Natural killer cell (primary cell): ENCODE measurements at regions of chr1 and their contacts with region 1.

Region 1: GRCh38 chr1:86380257-86380861 is 15.8 kb downstream of the ODF2L start:
- DNase-seq: peak in 1 of 2 donors; percentile 82
- ATAC-seq: peak; percentile 76 to 90 (median 81)
- H3K4me3 ChIP-seq: no peak overlapping the region
- H3K4me3 Mint-ChIP-seq: no peak overlapping the region
- H3K27ac ChIP-seq: no peak overlapping the region
- H3K27ac Mint-ChIP-seq: no peak overlapping the region
- H3K4me1 ChIP-seq: no peaks in the 10 kb centered on the region
- H3K4me1 Mint-ChIP-seq: peaks cover 0 to 8% of the 10 kb centered on the region in 2 donors
- H3K27me3 ChIP-seq: no peaks in the 10 kb centered on the region
- H3K27me3 Mint-ChIP-seq: no peaks in the 10 kb centered on the region
- CTCF ChIP-seq: peak; percentile 91

Region 2: GRCh38 chr1:86470859-86471258 is 90.5 kb after region 1 on chr1:
- intact Hi-C with region 1: loop called (anchors 2 kb)
- DNase-seq: no peak
- ATAC-seq: no peak
- H3K4me3 ChIP-seq: no peak overlapping the region
- H3K4me3 Mint-ChIP-seq: no peak overlapping the region
- H3K27ac ChIP-seq: no peak overlapping the region
- H3K27ac Mint-ChIP-seq: no peak overlapping the region
- H3K4me1 ChIP-seq: no peaks in the 10 kb centered on the region
- H3K4me1 Mint-ChIP-seq: no peaks in the 10 kb centered on the region
- H3K27me3 ChIP-seq: peaks cover 3% of the 10 kb centered on the region
- H3K27me3 Mint-ChIP-seq: peaks cover 18 to 22% of the 10 kb centered on the region in 2 donors
- CTCF ChIP-seq: no peak

Region 3: DNA sequence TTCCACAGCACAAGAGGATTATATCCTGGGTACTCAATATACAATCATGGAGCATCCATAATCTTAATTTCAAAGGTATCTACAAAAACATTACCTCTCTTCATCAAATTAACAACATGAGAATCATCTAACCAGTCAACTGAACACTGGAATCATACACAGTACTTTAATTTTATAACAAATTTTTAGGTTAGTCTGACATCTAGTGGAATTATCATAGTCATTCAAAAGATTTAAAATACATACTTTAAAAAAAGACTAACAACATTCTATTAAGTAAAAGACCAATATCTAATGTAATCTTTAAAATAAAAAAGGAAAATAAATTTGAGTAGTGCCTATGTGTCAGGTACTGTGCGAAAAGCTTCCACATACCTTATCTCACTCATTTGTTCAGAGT is 307.2 kb after region 1 on chr1:
- intact Hi-C with region 1: loop called (anchors 5 kb)
- DNase-seq: no peak
- ATAC-seq: peak in 2 of 3 donors; percentile 49 to 50
- H3K4me3 ChIP-seq: no peak overlapping the region
- H3K4me3 Mint-ChIP-seq: no peak overlapping the region
- H3K27ac ChIP-seq: no peak overlapping the region
- H3K27ac Mint-ChIP-seq: no peak overlapping the region
- H3K4me1 ChIP-seq: no peaks in the 10 kb centered on the region
- H3K4me1 Mint-ChIP-seq: no peaks in the 10 kb centered on the region
- H3K27me3 ChIP-seq: no peaks in the 10 kb centered on the region
- H3K27me3 Mint-ChIP-seq: no peaks in the 10 kb centered on the region
- CTCF ChIP-seq: peak; percentile 49

Region 4: GRCh38 chr1:86741947-86742572 is 361.7 kb after region 1 on chr1:
- intact Hi-C with region 1: loop called (anchors 5 kb)
- DNase-seq: peak in 1 of 2 donors; percentile 77
- ATAC-seq: no peak
- H3K4me3 ChIP-seq: no peak overlapping the region
- H3K4me3 Mint-ChIP-seq: no peak overlapping the region
- H3K27ac ChIP-seq: no peak overlapping the region
- H3K27ac Mint-ChIP-seq: no peak overlapping the region
- H3K4me1 ChIP-seq: peaks cover 5% of the 10 kb centered on the region
- H3K4me1 Mint-ChIP-seq: peaks cover 0 to 12% of the 10 kb centered on the region in 2 donors
- H3K27me3 ChIP-seq: no peaks in the 10 kb centered on the region
- H3K27me3 Mint-ChIP-seq: no peaks in the 10 kb centered on the region
- CTCF ChIP-seq: peak; percentile 80